Ovary (tissue), 10 donors: ENCODE measurements at regions of chr14 and their contacts with region 1.

Region 1: DNA sequence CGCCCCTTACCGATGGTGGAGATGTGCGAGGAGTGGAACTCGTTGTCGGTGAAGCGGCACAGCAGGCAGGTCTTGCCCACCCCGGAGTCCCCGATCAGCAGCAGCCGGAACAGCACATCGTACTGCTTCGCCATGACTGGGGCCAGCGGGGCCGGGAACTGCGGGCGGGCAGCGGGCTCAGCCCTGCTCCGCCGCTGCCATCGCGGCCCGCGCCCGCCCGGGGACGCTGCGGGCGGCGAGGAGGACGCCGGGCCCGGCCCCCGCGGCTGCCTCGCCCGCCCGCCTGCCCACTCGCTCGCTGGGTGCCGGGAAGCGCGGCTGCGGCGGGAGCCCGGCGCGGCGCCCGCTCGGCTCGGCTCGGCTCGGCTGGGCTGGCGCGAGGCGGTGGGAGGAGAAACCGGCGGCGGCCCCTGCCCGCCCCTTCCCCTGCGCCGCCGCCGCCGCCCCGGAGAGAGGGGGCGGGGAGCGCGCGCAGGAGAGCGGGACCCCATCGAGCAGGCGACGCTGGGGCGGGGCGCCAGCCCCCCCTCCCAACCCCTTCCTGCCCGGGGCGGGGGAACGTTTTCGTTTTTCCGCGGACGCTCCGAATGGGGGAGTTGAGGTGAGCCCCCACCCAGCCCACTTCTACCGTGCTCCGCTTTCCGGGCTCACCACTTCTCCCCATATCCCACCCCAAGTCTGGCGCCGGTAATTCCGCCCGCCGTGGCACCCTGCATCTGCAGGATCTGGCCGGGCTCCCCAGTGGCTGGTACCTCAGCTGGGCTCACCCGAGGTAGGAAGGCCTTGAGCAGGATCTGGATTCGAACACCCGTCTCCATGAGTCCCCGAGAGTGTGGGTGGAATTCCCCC is at the start of gene RAB15:
- DNase-seq: peak in 4 of 5 donors; percentile 25 to 65 (median 49)
- H3K4me3 ChIP-seq: peak within 1 kb of the TSS; percentile 60
- H3K27ac ChIP-seq: peak within 1 kb of the TSS in 1 of 2 donors; percentile 44
- H3K4me1 ChIP-seq: peaks cover 2% of the 10 kb centered on the region
- H3K27me3 ChIP-seq: no peaks in the 10 kb centered on the region
- CTCF ChIP-seq: no peak
- EP300 ChIP-seq: no peak
- POLR2A ChIP-seq: no peak
- total RNA-seq, gene RAB15: 0.83 to 2.9 (median 2.5) TPM

Region 2: DNA sequence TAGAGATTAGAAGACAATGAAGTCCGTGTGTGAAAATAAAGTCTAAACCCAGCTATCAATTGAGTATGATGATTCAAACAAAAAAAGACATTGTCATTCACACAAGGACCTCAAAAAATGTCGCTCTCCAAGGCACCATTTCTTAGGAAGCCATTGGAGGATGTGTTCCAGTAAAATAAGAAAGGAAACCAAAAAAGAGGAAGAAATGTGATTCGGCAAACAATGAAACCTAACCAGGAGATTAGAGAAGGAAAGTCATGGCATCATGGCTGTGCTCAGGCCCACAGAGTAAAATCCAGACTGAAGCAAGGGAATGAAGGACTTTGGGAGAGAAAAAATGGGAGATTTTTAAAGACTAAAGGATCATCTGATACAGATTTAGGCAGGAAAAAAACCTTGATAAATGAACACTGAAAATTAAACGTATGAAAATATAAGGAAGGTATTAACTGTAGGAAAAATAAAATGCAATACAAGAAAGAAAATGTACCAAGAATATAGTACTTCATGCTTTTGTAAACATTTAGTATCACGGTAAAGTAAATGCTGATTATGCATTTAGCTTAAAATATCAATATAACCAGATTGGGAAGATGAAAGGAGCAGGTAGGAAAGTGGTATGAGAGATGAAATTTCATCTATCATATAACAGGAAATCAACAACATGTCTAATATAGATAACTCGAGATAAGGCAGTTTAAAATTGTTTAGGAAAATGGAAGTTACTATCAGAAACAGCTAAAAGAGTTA is 622.3 kb before region 1 on chr14:
- intact Hi-C with region 1: no loop called
- DNase-seq: no peak
- H3K4me3 ChIP-seq: no peak overlapping the region
- H3K27ac ChIP-seq: no peak overlapping the region
- H3K4me1 ChIP-seq: no peaks in the 10 kb centered on the region
- H3K27me3 ChIP-seq: no peaks in the 10 kb centered on the region
- CTCF ChIP-seq: no peak
- EP300 ChIP-seq: no peak
- POLR2A ChIP-seq: no peak

Region 3: DNA sequence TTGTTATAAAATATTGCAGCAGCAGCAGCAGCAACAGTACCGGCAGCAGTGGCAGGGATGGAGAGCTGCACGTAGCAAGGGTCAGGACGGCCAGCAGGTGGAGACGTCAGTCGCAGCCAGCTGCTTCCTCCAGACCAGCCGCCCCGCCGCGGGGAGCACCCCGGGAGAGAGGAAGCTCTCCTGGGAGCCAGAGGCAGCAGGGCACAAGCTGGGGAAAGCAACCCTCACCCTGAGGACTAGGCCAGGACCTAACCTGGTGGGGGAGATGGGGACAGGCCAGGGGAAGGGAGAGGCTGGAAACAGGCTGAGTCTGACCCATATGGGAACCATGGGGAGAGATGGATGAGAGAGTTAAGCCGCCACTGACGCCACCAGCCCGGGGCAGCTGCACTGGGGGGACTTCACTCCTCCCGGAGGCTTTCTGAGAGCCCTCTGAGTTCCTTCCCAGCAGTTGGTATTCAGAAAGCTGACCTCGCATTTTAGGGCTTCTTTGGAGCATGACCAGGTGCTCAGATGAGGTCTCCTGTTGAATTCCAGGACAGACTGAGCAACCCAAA is 148.8 kb before region 1 on chr14:
- intact Hi-C with region 1: loop called in 1 of 4 experiments (anchors 5 kb)
- DNase-seq: peak; percentile 62 to 85 (median 70)
- H3K4me3 ChIP-seq: no peak overlapping the region
- H3K27ac ChIP-seq: no peak overlapping the region
- H3K4me1 ChIP-seq: no peaks in the 10 kb centered on the region
- H3K27me3 ChIP-seq: no peaks in the 10 kb centered on the region
- CTCF ChIP-seq: peak; percentile 29 to 56 (median 46)
- EP300 ChIP-seq: no peak
- POLR2A ChIP-seq: no peak

Region 4: GRCh38 chr14:64952598-64953309 is 19.4 kb before region 1 on chr14:
- intact Hi-C with region 1: no loop called
- DNase-seq: no peak
- H3K4me3 ChIP-seq: no peak overlapping the region
- H3K27ac ChIP-seq: no peak overlapping the region
- H3K4me1 ChIP-seq: no peaks in the 10 kb centered on the region
- H3K27me3 ChIP-seq: no peaks in the 10 kb centered on the region
- CTCF ChIP-seq: no peak
- EP300 ChIP-seq: no peak
- POLR2A ChIP-seq: no peak

Region 5: DNA sequence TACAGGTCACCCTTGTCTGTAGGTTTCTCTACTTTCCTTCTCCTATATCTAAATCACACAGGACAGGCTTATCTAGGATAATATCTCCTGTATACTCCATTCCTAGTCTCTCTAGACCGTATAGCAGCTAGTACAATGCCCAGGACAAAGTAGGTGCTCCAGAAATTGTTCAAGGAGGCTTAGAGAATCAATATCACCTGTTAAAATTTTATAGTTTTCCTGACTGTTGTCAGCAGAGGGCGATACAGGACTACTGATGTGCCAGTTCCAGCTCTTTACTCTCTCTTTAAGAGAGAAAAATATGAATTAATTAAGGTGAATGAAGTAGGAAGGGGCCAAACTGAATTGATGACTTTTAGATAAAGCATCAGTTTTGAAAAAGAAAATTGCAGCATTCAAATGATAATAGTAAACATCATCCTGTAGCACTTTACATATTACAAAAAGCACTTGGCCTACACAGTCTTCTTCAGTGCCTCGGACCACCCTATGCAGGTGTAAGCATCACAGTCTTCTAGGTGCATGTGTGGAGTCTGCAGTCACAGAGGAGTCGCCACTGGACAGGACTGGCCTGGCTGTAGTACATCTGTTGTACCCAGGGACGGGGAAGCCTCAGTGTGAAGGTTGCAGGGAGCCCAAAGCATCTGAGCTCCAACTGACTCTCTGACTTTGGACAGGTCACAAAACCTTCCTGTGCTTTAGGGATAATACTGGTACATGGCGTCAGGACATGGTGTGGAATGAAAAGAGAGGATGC is 192.1 kb after region 1 on chr14:
- intact Hi-C with region 1: no loop called
- DNase-seq: no peak
- H3K4me3 ChIP-seq: no peak overlapping the region
- H3K27ac ChIP-seq: no peak overlapping the region
- H3K4me1 ChIP-seq: no peaks in the 10 kb centered on the region
- H3K27me3 ChIP-seq: no peaks in the 10 kb centered on the region
- CTCF ChIP-seq: peak; percentile 21 to 51 (median 44)
- EP300 ChIP-seq: no peak
- POLR2A ChIP-seq: no peak